IMR-90 (cell line): ENCODE measurements at regions of chr18 and their contacts with region 1.

Region 1: DNA sequence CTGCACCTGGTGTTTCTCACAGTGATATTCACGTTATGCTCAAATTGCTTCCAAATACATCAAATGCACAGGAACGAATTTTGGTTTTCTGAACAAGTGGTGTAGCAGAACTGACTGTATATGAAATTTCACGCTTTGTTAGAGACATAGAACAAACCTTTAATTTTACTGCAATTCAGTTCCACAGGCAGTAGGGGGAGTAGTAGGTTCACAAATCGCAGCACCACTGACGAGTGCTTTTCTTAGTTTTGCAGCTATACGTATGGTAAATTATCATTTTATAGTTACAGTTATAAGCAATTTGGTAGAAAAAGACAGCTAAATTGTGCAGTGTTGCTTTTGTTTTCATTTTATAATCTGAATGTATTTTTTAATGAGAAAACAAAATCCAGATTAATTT is 113.3 kb downstream of the KIAA1328 start:
- DNase-seq: peak; percentile 53
- ATAC-seq: peak; percentile 83
- H3K4me3 ChIP-seq: no peak overlapping the region
- H3K27ac ChIP-seq: no peak overlapping the region
- H3K4me1 ChIP-seq: no peaks in the 10 kb centered on the region
- H3K27me3 ChIP-seq: no peaks in the 10 kb centered on the region
- CTCF ChIP-seq: peak; percentile 76
- POLR2A ChIP-seq: no peak
- RAD21 ChIP-seq: peak; percentile 80

Region 2: DNA sequence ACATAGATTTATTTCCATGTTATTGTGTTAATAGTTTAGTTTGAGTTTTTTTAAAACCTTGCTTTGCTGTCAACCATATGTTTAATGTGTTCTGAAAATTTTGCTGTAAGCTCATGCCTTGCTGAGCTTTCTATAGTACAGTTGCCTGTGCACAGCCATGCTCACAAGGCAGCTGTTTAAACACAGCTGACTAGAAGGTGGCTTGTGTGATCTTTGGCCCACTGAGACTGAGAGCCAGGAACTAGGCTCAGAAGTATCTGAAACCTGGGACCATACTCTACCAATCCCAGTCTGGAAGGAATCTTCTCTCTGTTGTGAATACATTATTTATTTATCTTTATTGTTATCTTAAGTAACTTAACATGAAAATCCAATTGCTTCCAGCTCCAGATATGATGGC is 237.1 kb after region 1 on chr18:
- CTCF ChIA-PET with region 1: no interaction called
- POLR2A ChIA-PET with region 1: no interaction called
- dilution Hi-C with region 1: no loop called
- in situ Hi-C with region 1: no loop called
- intact Hi-C with region 1: no loop called
- DNase-seq: no peak
- ATAC-seq: no peak
- H3K4me3 ChIP-seq: no peak overlapping the region
- H3K27ac ChIP-seq: no peak overlapping the region
- H3K4me1 ChIP-seq: no peaks in the 10 kb centered on the region
- H3K27me3 ChIP-seq: no peaks in the 10 kb centered on the region
- CTCF ChIP-seq: no peak
- POLR2A ChIP-seq: no peak
- RAD21 ChIP-seq: no peak

Region 3: DNA sequence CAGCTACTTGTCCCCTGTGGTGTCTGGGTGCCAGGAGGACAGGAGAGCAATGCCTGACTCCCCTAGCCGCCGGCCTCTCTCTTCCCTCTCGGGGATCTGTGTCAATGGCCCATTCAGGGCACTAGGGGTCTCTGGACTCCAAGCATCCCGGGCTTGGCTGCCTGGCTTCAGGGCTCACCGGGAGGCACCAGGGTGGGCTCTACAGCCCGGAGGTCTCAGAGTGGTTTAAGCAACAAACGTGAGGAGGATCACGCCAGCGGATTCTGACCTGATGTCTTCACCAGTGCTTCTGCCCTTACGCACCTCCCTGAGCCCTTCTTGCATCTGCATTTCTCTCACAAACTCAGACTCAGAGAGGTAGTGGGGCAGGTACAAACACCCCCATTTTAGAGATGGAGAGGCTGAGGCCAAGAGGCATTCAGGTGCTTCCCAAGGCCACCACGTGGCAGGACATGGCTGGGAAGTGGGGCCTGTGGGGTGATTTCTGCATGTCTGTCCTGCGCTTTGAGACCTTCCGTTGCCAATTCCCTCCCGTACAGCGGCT is 380.3 kb after region 1 on chr18:
- CTCF ChIA-PET with region 1: interaction called, 3 read pairs
- POLR2A ChIA-PET with region 1: no interaction called
- dilution Hi-C with region 1: no loop called
- in situ Hi-C with region 1: no loop called
- intact Hi-C with region 1: loop called (anchors 1 kb)
- DNase-seq: peak; percentile 21
- ATAC-seq: peak; percentile 93
- H3K4me3 ChIP-seq: no peak overlapping the region
- H3K27ac ChIP-seq: no peak overlapping the region
- H3K4me1 ChIP-seq: no peaks in the 10 kb centered on the region
- H3K27me3 ChIP-seq: peaks cover 43% of the 10 kb centered on the region
- CTCF ChIP-seq: peak; percentile 71
- POLR2A ChIP-seq: no peak
- RAD21 ChIP-seq: peak; percentile 61

Region 4: DNA sequence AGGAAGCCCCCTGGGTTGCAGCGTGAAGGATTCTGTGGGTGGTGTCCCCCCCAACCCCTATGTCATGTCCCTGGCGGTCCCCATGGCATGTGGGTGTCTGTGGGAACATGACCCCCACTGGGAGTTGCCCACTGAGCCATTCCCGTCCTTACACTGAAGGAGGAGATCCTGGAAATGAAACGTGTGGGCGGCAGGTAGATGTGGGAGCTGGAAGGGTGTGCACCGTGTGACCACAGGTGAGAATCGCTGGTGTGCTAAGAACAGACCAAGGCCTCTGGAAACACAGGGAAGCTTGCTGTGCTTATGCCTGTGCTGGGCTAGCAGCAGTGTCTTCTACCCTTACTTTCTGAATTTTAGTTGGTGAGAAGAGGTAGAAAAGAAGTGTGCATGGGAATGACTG is 400.6 kb after region 1 on chr18:
- CTCF ChIA-PET with region 1: no interaction called
- POLR2A ChIA-PET with region 1: no interaction called
- dilution Hi-C with region 1: no loop called
- in situ Hi-C with region 1: no loop called
- intact Hi-C with region 1: loop called (anchors 1 kb)
- DNase-seq: no peak
- ATAC-seq: no peak
- H3K4me3 ChIP-seq: no peak overlapping the region
- H3K27ac ChIP-seq: no peak overlapping the region
- H3K4me1 ChIP-seq: no peaks in the 10 kb centered on the region
- H3K27me3 ChIP-seq: peaks cover 15% of the 10 kb centered on the region; the same call in 1 of the 2 replicates
- CTCF ChIP-seq: no peak
- POLR2A ChIP-seq: no peak
- RAD21 ChIP-seq: no peak

Region 5: DNA sequence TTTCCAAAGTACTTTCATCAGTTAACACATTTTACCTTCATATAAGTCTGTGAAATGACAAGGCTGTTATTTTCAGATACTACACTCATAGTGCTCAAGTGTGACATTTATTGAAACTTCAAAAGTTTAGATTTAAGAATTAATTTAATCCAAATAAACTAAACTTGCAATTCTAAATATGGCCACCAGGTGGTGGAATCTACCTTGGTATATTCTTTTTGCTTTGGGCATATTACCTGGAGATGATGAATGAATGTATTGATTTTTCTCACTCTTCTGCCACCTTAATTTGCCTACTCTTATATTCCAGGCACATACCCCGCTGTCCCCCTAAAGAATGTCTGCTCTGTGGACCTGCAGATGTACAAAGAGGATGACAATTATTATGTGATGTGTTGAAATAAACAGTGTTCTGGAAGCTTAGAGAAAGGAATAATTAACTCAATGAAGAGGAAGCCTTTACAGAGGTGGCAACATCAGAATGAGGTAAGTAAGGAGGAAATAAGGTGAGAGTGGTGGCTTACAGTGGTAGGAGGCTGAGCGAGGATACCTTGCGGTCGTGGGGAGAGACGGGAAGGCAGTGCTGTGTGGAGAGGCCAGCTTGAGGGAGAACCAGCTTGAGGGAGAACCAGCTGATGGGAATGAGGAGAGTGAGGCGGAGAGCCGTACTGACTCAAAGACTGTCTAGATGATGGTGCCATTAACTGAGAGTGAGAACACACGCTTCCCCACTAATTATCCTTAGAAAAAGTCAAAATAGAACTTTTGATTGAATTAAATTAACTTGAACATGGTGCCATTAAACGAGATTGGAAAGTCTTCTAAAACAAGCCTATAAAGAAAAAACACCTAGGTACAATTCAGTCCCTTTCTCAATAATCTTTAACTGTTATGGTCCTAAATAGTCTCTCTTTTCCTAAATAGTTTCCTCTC is 443.8 kb after region 1 on chr18:
- CTCF ChIA-PET with region 1: no interaction called
- POLR2A ChIA-PET with region 1: no interaction called
- dilution Hi-C with region 1: no loop called
- in situ Hi-C with region 1: no loop called
- intact Hi-C with region 1: loop called (anchors 5 kb)
- DNase-seq: peak; percentile 37
- ATAC-seq: peak; percentile 40
- H3K4me3 ChIP-seq: no peak overlapping the region
- H3K27ac ChIP-seq: no peak overlapping the region
- H3K4me1 ChIP-seq: no peaks in the 10 kb centered on the region
- H3K27me3 ChIP-seq: peaks cover 19% of the 10 kb centered on the region
- CTCF ChIP-seq: peak; percentile 86
- POLR2A ChIP-seq: no peak
- RAD21 ChIP-seq: peak; percentile 89

Region 6: DNA sequence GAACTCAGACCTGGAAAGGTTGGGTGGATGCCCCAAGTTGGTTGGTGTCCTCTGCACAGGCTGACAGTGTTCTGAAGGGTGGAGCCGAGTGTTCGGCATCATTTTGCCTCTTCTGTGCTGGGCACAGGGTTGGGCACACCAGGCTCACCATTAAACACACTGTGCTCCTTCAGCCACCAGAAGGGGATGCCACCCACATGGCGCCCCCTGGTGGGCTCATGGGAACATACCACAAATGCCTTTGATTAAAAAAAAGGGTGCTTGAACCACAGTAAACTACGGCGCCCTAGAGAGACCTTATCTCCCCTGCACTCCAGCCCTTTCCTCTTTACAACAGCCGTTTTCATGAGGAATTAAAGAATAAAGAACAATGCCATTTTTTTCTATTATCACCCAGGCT is 533.9 kb after region 1 on chr18:
- CTCF ChIA-PET with region 1: no interaction called
- POLR2A ChIA-PET with region 1: no interaction called
- dilution Hi-C with region 1: no loop called
- in situ Hi-C with region 1: loop called (anchors 25 kb)
- intact Hi-C with region 1: loop called (anchors 10 kb)
- DNase-seq: peak; percentile 14
- ATAC-seq: peak; percentile 68
- H3K4me3 ChIP-seq: no peak overlapping the region
- H3K27ac ChIP-seq: no peak overlapping the region
- H3K4me1 ChIP-seq: no peaks in the 10 kb centered on the region
- H3K27me3 ChIP-seq: peaks cover 30% of the 10 kb centered on the region
- CTCF ChIP-seq: peak; percentile 67
- POLR2A ChIP-seq: no peak
- RAD21 ChIP-seq: peak; percentile 70

Region 7: DNA sequence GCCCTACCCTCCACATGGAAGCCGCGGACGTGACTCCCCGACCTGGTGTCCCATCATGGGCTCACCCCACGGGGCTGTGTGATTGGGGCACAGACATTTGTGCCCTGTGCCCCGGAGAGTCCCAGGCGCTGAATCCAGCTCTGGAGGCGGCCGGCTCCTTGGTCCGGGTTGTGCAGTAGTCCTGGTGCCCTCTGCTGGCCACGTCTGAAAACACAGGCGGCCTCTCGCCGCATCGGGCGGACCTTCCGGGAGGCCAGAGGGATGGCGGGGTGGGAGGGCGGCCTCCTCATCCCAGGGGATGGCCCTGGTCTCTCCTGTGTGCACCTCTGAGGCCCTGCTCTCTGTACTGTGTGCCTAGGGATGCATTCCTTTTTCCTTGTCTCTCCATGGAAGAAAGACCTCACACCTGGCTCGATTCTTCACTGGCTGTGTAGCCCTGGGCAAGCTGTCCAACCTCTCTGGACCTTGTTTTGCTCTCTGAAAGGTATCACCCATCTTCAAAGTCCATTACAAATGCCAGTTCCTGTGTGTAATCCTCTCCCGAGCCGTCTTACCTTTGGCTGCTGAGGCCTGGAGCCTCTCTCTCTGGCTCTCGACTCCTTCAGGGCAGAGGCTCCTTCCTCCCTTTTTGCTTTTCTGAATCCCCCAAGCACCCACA is 595.7 kb after region 1 on chr18:
- CTCF ChIA-PET with region 1: no interaction called
- POLR2A ChIA-PET with region 1: no interaction called
- dilution Hi-C with region 1: no loop called
- in situ Hi-C with region 1: no loop called
- intact Hi-C with region 1: loop called (anchors 5 kb)
- DNase-seq: peak; percentile 44
- ATAC-seq: peak; percentile 98
- H3K4me3 ChIP-seq: no peak overlapping the region
- H3K27ac ChIP-seq: no peak overlapping the region
- H3K4me1 ChIP-seq: no peaks in the 10 kb centered on the region
- H3K27me3 ChIP-seq: peaks cover 28% of the 10 kb centered on the region; the same call in 1 of the 2 replicates
- CTCF ChIP-seq: peak; percentile 83
- POLR2A ChIP-seq: no peak
- RAD21 ChIP-seq: peak; percentile 82